ENCODE measurements at regions of chr3 and their contacts with region 1.

Region 1: DNA sequence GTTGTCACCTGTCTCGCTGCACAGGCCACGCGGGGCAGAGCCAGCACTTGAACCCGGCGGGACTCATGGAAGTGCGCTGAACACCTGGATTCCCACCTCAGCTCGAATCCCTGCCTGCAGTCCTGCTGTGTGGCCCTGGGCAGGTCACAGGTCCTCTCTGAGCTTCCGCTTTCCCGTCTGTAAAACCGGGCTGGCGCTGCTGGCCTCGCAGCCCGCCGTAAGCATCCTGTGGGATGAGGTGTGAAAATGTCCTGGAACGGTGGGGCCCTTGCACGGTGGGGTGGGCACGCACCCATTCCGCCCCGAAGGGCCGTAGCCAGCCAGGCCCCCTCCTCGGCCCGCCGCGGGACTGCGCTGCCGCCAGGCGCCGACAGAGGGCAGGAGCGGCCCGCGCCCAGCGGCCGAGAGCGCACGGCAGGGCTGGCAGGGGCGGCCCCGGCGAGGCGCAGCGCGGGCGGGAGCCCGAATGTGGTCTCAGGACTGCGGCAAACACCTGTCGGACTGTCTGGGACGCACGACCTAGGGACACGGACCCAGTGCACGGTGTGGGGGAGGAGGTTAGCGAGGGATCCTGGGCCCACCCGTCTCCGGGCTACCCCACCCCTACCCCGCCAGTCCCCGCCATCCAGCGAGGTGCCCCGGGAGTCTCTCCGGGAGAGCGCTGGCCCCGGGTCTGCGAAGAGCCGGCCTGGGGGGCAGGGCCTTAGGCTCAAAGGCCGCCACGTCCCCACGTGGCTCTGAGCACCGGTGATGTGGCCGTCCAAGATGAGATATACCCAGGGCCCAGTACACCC is 40.4 kb downstream of the DNAJB8 start:
- DNase-seq: peak; percentile 17 to 61
- ATAC-seq: peak; percentile 84 to 92
- H3K4me3 ChIP-seq: peak overlapping the region; percentile 30; the same call in 2 of the 3 replicates
- H3K27ac ChIP-seq: peak overlapping the region; percentile 54 to 83; a peak in 5 of 6 replicates
- H3K4me1 ChIP-seq: 0 out of 3 replicates have a peak, but pooled peaks cover 3% of the 10 kb centered on the region
- CTCF ChIP-seq: peak; percentile 79
- EP300 ChIP-seq: no peak
- POLR2A ChIP-seq: no peak
- RAD21 ChIP-seq: peak; percentile 54 to 88

Region 2: GRCh38 chr3:128438488-128439072 is 12.3 kb after region 1 on chr3:
- CTCF ChIA-PET with region 1: interaction called, 12 read pairs
- POLR2A ChIA-PET with region 1: no interaction called
- DNase-seq: no peak
- ATAC-seq: peak in 1 of 2 experiments; percentile 71; a peak in 3 of 6 replicates
- H3K4me3 ChIP-seq: no peak overlapping the region
- H3K27ac ChIP-seq: no peak overlapping the region
- H3K4me1 ChIP-seq: no peaks in the 10 kb centered on the region
- CTCF ChIP-seq: peak; percentile 23; the same call in 2 of the 3 replicates
- EP300 ChIP-seq: no peak
- POLR2A ChIP-seq: no peak
- RAD21 ChIP-seq: no peak

Region 3: DNA sequence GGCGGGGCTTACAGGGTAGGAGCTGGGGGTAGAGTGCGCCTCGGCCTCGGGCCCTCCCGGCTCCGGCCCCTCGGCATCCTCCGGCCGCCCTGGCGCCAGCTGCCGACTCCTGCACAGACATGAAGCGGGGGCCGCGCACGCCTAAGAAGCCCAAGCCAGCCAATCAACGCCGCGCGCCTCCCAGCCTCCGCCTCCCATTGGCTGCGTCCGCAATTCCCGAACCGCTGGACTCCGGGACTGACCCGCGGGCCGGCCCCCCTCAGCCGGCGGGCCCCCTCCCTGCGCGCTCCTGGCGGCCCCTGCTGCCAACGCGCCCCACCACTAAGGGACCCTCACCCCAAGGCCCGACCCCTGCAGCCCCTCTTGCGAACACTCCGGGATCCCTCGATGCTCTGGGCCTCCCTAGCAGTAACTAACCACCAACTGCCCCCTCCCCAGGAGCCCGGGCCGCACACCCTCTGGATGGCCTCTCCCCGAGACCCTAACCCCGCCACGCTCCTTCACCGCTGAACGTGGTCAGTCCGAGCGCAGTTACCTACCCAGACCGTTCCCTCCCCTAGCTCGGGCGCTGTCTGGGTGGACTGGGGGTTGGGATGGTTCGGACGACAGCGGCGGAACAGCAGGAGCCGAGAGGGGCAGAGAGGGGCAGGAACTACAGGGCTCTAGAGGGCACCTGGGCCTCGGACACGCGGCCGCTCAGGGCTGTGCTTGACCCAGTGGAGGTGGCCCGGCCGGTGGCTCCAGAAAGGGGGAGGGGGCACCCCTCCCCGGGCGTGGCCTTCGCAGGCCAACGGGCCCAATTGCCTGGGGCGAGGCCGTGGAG is 61.7 kb after region 1 on chr3:
- CTCF ChIA-PET with region 1: interaction called, 27 read pairs
- POLR2A ChIA-PET with region 1: no interaction called
- DNase-seq: peak; percentile 83 to 89
- ATAC-seq: peak; percentile 82 to 96
- H3K4me3 ChIP-seq: peak overlapping the region; percentile 84
- H3K27ac ChIP-seq: peak overlapping the region; percentile 76 to 84
- H3K4me1 ChIP-seq: peaks cover 12% of the 10 kb centered on the region; the same call in 2 of the 3 replicates
- CTCF ChIP-seq: no peak
- EP300 ChIP-seq: no peak
- POLR2A ChIP-seq: peak; percentile 50
- RAD21 ChIP-seq: no peak

Region 4: GRCh38 chr3:128497387-128498126 is 71.2 kb after region 1 on chr3:
- CTCF ChIA-PET with region 1: interaction called, 57 read pairs
- POLR2A ChIA-PET with region 1: no interaction called
- DNase-seq: peak; percentile 41 to 45
- ATAC-seq: peak; percentile 70 to 78
- H3K4me3 ChIP-seq: peak overlapping the region; percentile 73
- H3K27ac ChIP-seq: peak overlapping the region; percentile 80 to 84
- H3K4me1 ChIP-seq: no peaks in the 10 kb centered on the region
- CTCF ChIP-seq: peak; percentile 97
- EP300 ChIP-seq: no peak
- POLR2A ChIP-seq: no peak
- RAD21 ChIP-seq: peak; percentile 41 to 93

Region 5: DNA sequence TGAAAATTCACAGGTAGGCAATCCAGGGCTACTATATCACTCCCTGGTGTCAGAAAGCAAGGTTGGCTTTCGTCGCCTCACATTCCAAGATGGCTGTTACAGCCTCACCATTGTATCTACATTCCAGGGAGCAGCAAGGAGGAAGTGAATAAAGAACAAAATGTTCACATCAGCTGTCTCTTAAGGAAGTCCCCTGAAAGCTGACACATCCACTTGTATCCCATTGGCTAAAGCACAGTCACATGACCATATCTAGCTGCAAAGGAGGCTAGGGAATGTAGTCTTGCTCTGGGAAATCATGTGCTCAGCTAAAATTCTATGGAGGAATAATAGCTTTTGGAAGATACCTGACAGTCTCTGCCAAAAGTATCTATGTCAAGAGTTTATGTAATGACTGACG is 79.4 kb after region 1 on chr3:
- CTCF ChIA-PET with region 1: interaction called, 11 read pairs
- POLR2A ChIA-PET with region 1: no interaction called
- DNase-seq: peak in 1 of 2 experiments; percentile 31
- ATAC-seq: no peak
- H3K4me3 ChIP-seq: no peak overlapping the region
- H3K27ac ChIP-seq: no peak overlapping the region
- H3K4me1 ChIP-seq: no peaks in the 10 kb centered on the region
- CTCF ChIP-seq: no peak
- EP300 ChIP-seq: no peak
- POLR2A ChIP-seq: no peak
- RAD21 ChIP-seq: no peak

Region 6: DNA sequence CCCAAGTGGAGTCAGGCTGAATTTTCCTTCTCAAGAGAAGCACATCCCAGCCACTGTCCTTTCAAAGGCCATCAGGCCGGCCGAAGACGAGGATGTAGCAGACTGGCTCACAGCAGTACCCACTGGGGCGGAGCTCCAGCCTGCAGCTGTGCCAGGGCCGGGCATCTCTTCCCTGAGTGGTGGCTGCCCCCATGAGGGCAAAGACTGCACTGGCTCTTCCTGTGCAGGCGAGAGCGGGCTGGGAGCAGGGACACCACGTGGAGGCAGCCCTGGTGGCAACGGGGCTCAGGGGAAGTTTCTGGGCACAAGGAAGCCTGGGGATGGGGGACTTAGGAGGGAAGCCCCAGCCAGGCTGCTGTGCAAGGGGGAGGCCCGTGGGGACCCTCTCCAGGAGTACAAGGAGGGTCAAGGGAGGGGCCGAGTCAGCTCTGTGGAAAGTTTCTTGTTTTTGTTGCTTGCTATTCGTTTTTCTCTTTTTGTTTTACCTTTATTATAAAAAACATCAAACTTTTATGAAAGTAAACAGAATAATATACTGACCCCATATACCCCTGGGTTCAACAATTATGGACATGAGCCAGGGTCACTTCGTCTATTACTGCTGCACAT is 158.2 kb after region 1 on chr3:
- CTCF ChIA-PET with region 1: interaction called, 15 read pairs
- POLR2A ChIA-PET with region 1: no interaction called
- DNase-seq: peak; percentile 74
- ATAC-seq: peak; percentile 100
- H3K4me3 ChIP-seq: no peak overlapping the region
- H3K27ac ChIP-seq: peak overlapping the region; percentile 37 to 76; a peak in 5 of 6 replicates
- H3K4me1 ChIP-seq: no peaks in the 10 kb centered on the region
- CTCF ChIP-seq: peak; percentile 62
- EP300 ChIP-seq: no peak
- POLR2A ChIP-seq: no peak
- RAD21 ChIP-seq: peak; percentile 87 to 90